ENCODE measurements at regions of chr12 and their contacts with region 1.

Region 1: DNA sequence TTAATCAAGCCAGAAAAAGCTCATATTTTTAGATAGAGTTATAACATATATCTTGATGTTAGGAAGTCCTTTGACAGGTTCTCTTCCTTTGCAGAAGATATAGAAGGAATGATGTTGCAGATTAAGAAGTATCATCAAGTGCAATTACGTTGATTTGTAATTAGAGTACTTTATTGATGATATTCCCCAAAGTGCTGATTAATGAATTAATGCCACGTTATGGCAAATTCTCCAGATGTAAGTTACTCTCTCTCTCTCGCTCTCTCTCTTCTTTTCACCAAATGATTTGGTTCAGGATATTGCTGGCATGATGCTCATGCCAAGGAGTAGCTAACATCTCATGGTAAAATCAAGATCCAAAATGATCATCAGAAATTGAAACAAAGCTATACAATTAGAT is 18.1 kb upstream of the CAND1 start:
- DNase-seq: no peak
- H3K4me3 ChIP-seq: no peak overlapping the region
- H3K27ac ChIP-seq: no peak overlapping the region
- H3K4me1 ChIP-seq: no peaks in the 10 kb centered on the region
- H3K27me3 ChIP-seq: no peaks in the 10 kb centered on the region
- CTCF ChIP-seq: no peak

Region 2: GRCh38 chr12:67275380-67275925 is 24.4 kb after region 1 on chr12:
- CTCF ChIA-PET with region 1: no interaction called
- POLR2A ChIA-PET with region 1: interaction called, 15 read pairs
- intact Hi-C with region 1: no loop called
- DNase-seq: peak; percentile 12 to 84
- H3K4me3 ChIP-seq: 0 out of 2 replicates have a peak overlapping the region, but pooled peaks have one; percentile 6
- H3K27ac ChIP-seq: peak overlapping the region; percentile 59
- H3K4me1 ChIP-seq: peaks cover 47% of the 10 kb centered on the region
- H3K27me3 ChIP-seq: no peaks in the 10 kb centered on the region
- CTCF ChIP-seq: no peak

Region 3: GRCh38 chr12:67364228-67364627 is 113.2 kb after region 1 on chr12:
- CTCF ChIA-PET with region 1: no interaction called
- POLR2A ChIA-PET with region 1: no interaction called
- intact Hi-C with region 1: no loop called
- DNase-seq: no peak
- H3K4me3 ChIP-seq: no peak overlapping the region
- H3K27ac ChIP-seq: no peak overlapping the region
- H3K4me1 ChIP-seq: peaks cover 4% of the 10 kb centered on the region; the same call in 1 of the 2 replicates
- H3K27me3 ChIP-seq: no peaks in the 10 kb centered on the region
- CTCF ChIP-seq: no peak

Measured in PC-9 (cell line).